ENCODE measurements at regions of chr1 and their contacts with region 1.

Region 1: DNA sequence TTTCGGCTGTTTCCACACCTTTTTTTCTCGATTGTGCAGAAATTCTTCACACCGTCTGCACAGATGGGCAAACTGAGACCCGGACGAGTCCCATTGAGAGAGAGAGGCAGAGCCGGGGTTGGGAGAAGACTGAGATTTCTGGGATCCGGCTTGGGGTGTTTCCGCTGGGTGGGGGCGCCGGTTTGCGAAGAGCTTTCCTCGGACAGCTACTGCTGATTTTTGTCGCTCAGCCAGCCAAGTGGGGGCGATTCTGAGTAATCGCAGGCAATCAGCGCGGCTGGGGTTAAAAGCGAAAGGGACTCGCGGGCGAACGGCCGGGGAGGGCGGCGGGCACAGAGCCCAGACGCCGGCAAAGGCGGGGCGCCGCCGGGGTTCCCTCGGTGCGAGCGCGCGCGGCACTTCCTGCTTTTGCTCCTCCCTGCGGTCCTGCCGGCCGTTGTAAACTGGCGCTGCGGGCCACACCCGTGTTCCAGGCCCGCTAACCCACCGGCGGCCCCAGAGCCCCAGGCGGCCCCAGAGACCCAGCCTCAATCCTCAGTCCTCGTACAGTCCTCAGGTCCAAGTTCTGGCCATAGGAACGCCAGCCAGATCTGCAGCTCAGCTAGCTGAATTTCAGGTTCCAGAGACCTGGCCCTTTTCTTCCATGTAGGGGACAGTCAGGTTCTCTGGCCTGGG is 32.4 kb upstream of the JUN start:
- DNase-seq: peak; percentile 76 to 93
- H3K4me3 ChIP-seq: peak overlapping the region; percentile 83
- H3K27ac ChIP-seq: peak overlapping the region; percentile 99
- H3K4me1 ChIP-seq: peaks cover 63% of the 10 kb centered on the region
- H3K27me3 ChIP-seq: no peaks in the 10 kb centered on the region
- CTCF ChIP-seq: no peak

Region 2: GRCh38 chr1:58573705-58574591 is 242.3 kb before region 1 on chr1:
- CTCF ChIA-PET with region 1: no interaction called
- POLR2A ChIA-PET with region 1: interaction called, 14 read pairs
- intact Hi-C with region 1: no loop called
- DNase-seq: peak; percentile 62 to 88
- H3K4me3 ChIP-seq: peak overlapping the region; percentile 97
- H3K27ac ChIP-seq: peak overlapping the region; percentile 99
- H3K4me1 ChIP-seq: peaks cover 61% of the 10 kb centered on the region
- H3K27me3 ChIP-seq: no peaks in the 10 kb centered on the region
- CTCF ChIP-seq: no peak

Region 3: GRCh38 chr1:58769809-58770320 is 46.3 kb before region 1 on chr1:
- CTCF ChIA-PET with region 1: no interaction called
- POLR2A ChIA-PET with region 1: no interaction called
- intact Hi-C with region 1: no loop called
- DNase-seq: no peak
- H3K4me3 ChIP-seq: no peak overlapping the region
- H3K27ac ChIP-seq: no peak overlapping the region
- H3K4me1 ChIP-seq: peaks cover 17% of the 10 kb centered on the region
- H3K27me3 ChIP-seq: no peaks in the 10 kb centered on the region
- CTCF ChIP-seq: no peak

Region 4: DNA sequence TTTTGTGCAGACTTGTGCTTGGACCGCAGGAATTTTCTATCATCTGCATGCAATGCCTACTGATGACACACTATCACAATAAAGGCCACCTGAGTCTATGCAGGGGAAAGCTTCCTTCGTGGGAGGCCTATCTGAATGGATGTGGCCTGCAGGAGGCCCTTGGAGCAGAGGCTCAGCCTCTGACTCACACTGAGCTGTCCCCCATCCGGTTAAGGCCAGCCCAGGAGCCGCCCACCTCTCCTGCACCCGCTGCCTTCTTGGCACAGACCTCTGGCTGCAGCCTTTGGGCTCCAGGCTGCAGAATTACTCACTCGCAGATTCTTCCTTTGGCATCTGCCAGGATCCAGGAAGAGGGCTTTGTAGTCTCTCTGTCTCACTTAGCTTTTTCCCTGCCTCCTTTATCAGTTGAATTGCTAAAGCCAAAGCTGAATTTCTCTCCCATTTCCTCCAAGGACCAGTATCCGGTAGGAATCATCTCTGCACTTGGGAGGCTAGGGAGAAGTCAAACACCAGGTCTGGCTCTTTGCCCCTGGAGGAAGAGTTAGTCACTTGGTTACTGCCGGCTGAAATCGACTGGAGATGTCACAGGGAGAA is 32.7 kb after region 1 on chr1:
- CTCF ChIA-PET with region 1: no interaction called
- POLR2A ChIA-PET with region 1: interaction called, 6 read pairs
- intact Hi-C with region 1: loop called (anchors 1 kb)
- DNase-seq: peak; percentile 95 to 98
- H3K4me3 ChIP-seq: peak overlapping the region; percentile 27
- H3K27ac ChIP-seq: peak overlapping the region; percentile 92
- H3K4me1 ChIP-seq: peaks cover 59% of the 10 kb centered on the region
- H3K27me3 ChIP-seq: no peaks in the 10 kb centered on the region
- CTCF ChIP-seq: no peak; the same call in 1 of the 2 replicates

Region 5: GRCh38 chr1:58896246-58897183 is 80.3 kb after region 1 on chr1:
- CTCF ChIA-PET with region 1: no interaction called
- POLR2A ChIA-PET with region 1: no interaction called
- intact Hi-C with region 1: loop called (anchors 1 kb)
- DNase-seq: peak; percentile 62 to 78
- H3K4me3 ChIP-seq: no peak overlapping the region
- H3K27ac ChIP-seq: peak overlapping the region; percentile 33; the same call in 1 of the 2 replicates
- H3K4me1 ChIP-seq: peaks cover 39% of the 10 kb centered on the region
- H3K27me3 ChIP-seq: no peaks in the 10 kb centered on the region
- CTCF ChIP-seq: no peak

Region 6: GRCh38 chr1:58932859-58933598 is 116.8 kb after region 1 on chr1:
- CTCF ChIA-PET with region 1: interaction called, 4 read pairs
- POLR2A ChIA-PET with region 1: interaction called, 3 read pairs
- intact Hi-C with region 1: loop called (anchors 1 kb)
- DNase-seq: peak; percentile 97 to 98
- H3K4me3 ChIP-seq: peak overlapping the region; percentile 13; the same call in 1 of the 2 replicates
- H3K27ac ChIP-seq: peak overlapping the region; percentile 94
- H3K4me1 ChIP-seq: peaks cover 76% of the 10 kb centered on the region
- H3K27me3 ChIP-seq: no peaks in the 10 kb centered on the region
- CTCF ChIP-seq: no peak

Region 7: GRCh38 chr1:59296358-59297256 is 480.4 kb after region 1 on chr1 and contains the start of gene FGGY:
- CTCF ChIA-PET with region 1: no interaction called
- POLR2A ChIA-PET with region 1: interaction called, 4 read pairs
- intact Hi-C with region 1: loop called (anchors 1 kb)
- DNase-seq: peak; percentile 95 to 97
- H3K4me3 ChIP-seq: peak within 1 kb of the TSS; percentile 78
- H3K27ac ChIP-seq: peak within 1 kb of the TSS; percentile 96
- H3K4me1 ChIP-seq: peaks cover 32% of the 10 kb centered on the region
- H3K27me3 ChIP-seq: no peaks in the 10 kb centered on the region
- CTCF ChIP-seq: no peak
- total RNA-seq, gene FGGY: 17.8 and 22.5 TPM in 2 replicates